HEK293T (cell line): ENCODE measurements at regions of chr1 and their contacts with region 1.

Region 1: DNA sequence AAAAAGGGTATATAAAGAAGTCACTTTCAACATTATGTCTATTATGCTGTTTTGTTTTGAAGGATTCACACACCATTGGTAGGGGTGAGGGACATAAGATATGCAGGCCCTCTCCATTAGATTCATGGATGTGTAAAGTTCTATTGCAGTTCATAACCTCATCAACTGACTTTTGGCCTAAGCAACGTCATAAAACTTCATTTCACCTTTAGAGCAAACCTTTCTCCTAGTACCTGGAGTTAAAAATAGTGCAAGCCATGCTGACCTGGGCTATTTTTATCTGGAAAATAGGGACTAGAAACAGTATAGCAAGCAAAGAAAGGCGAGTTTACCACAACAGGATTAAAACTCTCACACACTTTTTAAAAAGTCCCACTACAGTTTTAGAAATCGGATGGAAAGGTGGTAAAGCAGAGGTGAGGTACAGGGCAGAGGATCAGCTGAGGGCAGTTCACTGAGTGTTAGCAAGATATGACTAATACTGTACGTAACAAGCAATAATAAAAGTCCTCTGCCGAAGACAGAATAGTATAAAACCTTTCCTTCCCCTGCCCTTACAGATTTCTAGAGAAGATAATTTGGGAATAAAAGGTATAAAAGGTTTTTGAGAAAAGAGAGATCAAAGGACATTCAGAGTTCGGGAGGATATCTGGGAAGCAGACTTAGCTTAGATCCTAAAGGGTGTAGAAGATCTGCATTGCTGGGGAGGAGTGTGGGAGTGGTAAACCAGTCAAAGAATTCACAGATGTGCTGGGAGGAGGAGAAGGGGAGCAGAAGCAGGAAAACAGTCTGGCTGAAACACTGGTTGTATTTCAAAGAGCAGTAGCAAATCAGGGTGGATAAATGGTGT is 14.3 kb downstream of the EGLN1 start:
- DNase-seq: no peak

Region 2: GRCh38 chr1:231421993-231422764 is 14.4 kb after region 1 on chr1 and contains the start of gene EGLN1:
- CTCF ChIA-PET with region 1: interaction called, 4 read pairs
- POLR2A ChIA-PET with region 1: interaction called, 10 read pairs
- DNase-seq: peak; percentile 90